Heart left ventricle (tissue), 16 donors: ENCODE measurements at regions of chr9 and their contacts with region 1.

Region 1: DNA sequence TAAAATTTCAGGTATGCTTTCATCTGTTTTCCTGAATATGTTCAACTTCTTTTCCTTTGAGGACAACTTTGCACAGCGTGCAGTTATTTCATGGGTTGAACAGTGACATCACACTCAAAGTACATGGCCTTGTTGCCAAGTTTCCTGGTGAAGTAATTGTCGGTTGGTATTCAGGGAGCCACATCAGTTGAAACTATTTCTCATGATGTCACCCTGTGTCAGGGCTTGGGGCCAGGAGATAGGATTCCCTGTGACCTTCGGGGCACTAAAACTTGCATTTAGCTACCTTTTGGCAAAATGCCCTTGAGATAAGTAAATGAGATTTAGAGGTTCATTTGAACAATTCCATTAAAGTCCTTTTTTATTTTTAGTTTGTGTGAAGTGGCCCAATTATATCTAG is 383.9 kb downstream of the SH3GL2 start:
- DNase-seq: peak in 3 of 5 donors; percentile 15 to 55 (median 16)
- ATAC-seq: peak in 3 of 4 donors; percentile 86 to 95 (median 91)
- H3K4me3 ChIP-seq: no peak overlapping the region
- H3K27ac ChIP-seq: peak overlapping the region in 1 of 12 donors; percentile 7
- H3K4me1 ChIP-seq: peaks cover 0 to 16% (median 0%) of the 10 kb centered on the region in 12 donors
- H3K27me3 ChIP-seq: no peaks in the 10 kb centered on the region
- CTCF ChIP-seq: no peak
- POLR2A ChIP-seq: no peak

Region 2: GRCh38 chr9:17824191-17824590 is 138.6 kb before region 1 on chr9:
- intact Hi-C with region 1: loop called in 1 of 10 experiments (anchors 10 kb)
- DNase-seq: no peak
- ATAC-seq: peak in 3 of 4 donors; percentile 51 to 83 (median 61)
- H3K4me3 ChIP-seq: no peak overlapping the region
- H3K27ac ChIP-seq: peak overlapping the region in 5 of 12 donors; percentile 7 to 68 (median 46)
- H3K4me1 ChIP-seq: peaks cover 0 to 18% (median 10%) of the 10 kb centered on the region in 12 donors
- H3K27me3 ChIP-seq: no peaks in the 10 kb centered on the region
- CTCF ChIP-seq: peak in 5 of 12 donors; percentile 13 to 30 (median 14)
- POLR2A ChIP-seq: no peak

Region 3: GRCh38 chr9:17894471-17895178 is 68.1 kb before region 1 on chr9:
- intact Hi-C with region 1: loop called in 1 of 10 experiments (anchors 10 kb)
- DNase-seq: no peak
- ATAC-seq: no peak
- H3K4me3 ChIP-seq: no peak overlapping the region
- H3K27ac ChIP-seq: no peak overlapping the region
- H3K4me1 ChIP-seq: no peaks in the 10 kb centered on the region
- H3K27me3 ChIP-seq: no peaks in the 10 kb centered on the region
- CTCF ChIP-seq: no peak
- POLR2A ChIP-seq: no peak

Region 4: DNA sequence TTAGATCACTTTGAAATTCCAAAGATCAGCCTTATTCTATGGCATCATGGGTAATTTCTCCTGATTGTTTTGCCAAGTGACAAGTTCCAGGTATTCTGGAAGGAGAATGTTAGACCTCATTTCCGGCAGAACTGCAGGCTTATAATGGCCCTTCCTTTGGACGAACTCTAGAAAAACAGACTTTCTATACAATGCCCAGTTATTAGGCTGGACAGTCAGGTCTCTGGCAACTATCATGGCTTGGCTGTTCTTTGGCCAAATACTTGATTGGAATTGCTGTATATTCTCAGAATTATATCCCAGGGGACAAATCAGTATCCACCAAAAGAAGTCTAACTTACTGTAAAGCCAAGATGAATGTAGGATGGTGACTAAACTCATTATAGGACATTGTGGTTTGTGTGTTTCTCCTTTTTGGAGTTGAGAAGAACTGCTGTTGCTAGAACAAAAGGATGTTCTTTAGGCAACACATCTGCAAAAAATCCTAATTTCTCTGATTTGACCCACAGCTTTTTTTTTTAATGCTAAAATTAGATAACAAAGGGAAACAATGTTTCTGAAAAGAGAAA is 580.2 kb after region 1 on chr9:
- intact Hi-C with region 1: no loop called
- DNase-seq: no peak
- ATAC-seq: no peak
- H3K4me3 ChIP-seq: no peak overlapping the region
- H3K27ac ChIP-seq: peak overlapping the region in 4 of 12 donors; percentile 9 to 37 (median 24)
- H3K4me1 ChIP-seq: peaks cover 0 to 12% (median 2%) of the 10 kb centered on the region in 12 donors
- H3K27me3 ChIP-seq: no peaks in the 10 kb centered on the region
- CTCF ChIP-seq: no peak
- POLR2A ChIP-seq: no peak